Dendritic cell treated with granulocyte-macrophage colony-stimulating factor and Interleukin-4, amounts not matched to agents 40 ng/mL and 50 ng/mL, for 4 days (primary cell): ENCODE measurements at regions of chrX and their contacts with region 1.

Region 1: GRCh38 chrX:75156021-75156945 is at the start of gene ABCB7:
- H3K4me3 Mint-ChIP-seq: peak within 1 kb of the TSS; percentile 92
- H3K27ac Mint-ChIP-seq: peak within 1 kb of the TSS; percentile 93
- H3K4me1 Mint-ChIP-seq: peaks cover 22% of the 10 kb centered on the region
- H3K27me3 Mint-ChIP-seq: no peaks in the 10 kb centered on the region

Region 2: DNA sequence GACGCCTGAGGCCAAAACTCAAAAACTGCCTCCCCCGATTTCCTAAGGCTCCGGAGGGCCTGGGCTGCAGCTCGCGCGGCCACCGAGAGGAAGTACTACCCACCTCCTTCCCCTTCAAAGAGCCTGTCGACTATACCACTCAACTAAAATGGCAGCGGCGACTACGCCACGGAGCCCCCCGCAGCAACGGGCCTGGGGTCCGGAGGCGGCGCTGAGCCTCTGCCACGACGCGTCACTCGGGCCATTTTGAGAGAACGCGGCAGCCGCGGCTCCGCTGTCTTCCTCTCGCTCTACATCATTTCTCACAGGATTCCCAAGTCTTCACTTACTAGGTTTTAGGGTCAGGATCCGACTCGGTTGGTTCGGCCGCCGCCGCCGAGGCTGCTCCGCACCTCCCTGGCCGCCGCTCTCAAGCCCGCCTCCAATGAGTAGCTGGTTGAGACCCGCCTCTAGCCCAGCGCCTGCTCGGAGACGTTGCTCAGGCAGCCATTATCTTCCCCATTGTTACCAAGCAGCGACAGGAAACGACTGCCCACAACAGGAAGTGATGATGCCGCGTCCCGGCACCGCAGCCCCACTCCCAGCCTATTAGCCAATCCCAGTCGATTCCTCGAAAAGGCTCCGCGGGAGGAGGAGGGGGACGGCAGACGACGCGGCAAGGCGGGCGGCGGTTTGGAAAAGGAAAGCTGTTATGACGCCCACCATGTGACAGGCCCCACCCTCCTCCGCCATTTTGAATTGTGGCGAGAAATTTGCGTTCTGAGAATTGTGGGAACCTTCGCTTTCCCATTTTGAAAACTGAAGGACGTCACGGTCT is 542.0 kb before region 1 on chrX and contains the start of gene RLIM:
- intact Hi-C with region 1: loop called (anchors 10 kb)
- H3K4me3 Mint-ChIP-seq: peak within 1 kb of the TSS; percentile 100
- H3K27ac Mint-ChIP-seq: peak within 1 kb of the TSS; percentile 100
- H3K4me1 Mint-ChIP-seq: no peaks in the 10 kb centered on the region
- H3K27me3 Mint-ChIP-seq: no peaks in the 10 kb centered on the region

Region 3: GRCh38 chrX:75086731-75087195 is 69.5 kb before region 1 on chrX:
- intact Hi-C with region 1: loop called (anchors 10 kb)
- H3K4me3 Mint-ChIP-seq: no peak overlapping the region
- H3K27ac Mint-ChIP-seq: peak overlapping the region; percentile 64
- H3K4me1 Mint-ChIP-seq: peaks cover 20% of the 10 kb centered on the region
- H3K27me3 Mint-ChIP-seq: no peaks in the 10 kb centered on the region

Region 4: GRCh38 chrX:75273483-75273882 is 117.2 kb after region 1 on chrX:
- intact Hi-C with region 1: loop called (anchors 5 kb)
- H3K4me3 Mint-ChIP-seq: peak overlapping the region; percentile 87
- H3K27ac Mint-ChIP-seq: peak overlapping the region; percentile 94
- H3K4me1 Mint-ChIP-seq: peaks cover 25% of the 10 kb centered on the region
- H3K27me3 Mint-ChIP-seq: no peaks in the 10 kb centered on the region